SK-N-SH (cell line): ENCODE measurements at regions of chr17 and their contacts with region 1.

Region 1: GRCh38 chr17:82358465-82359350 is at the start of gene TEX19:
- DNase-seq: peak; percentile 72
- H3K4me3 ChIP-seq: no peak within 1 kb of the TSS; a peak in 1 of 4 replicates
- H3K27ac ChIP-seq: peak within 1 kb of the TSS in 1 of 2 experiments; percentile 26; a peak in 1 of 4 replicates
- H3K4me1 ChIP-seq: peaks cover 0 to 8% of the 10 kb centered on the region in 2 experiments; a peak in 1 of 4 replicates
- H3K27me3 ChIP-seq: no peaks in the 10 kb centered on the region; the same call in 1 of the 2 replicates
- CTCF ChIP-seq: peak; percentile 15; the same call in 1 of the 2 replicates
- EP300 ChIP-seq: no peak
- RAD21 ChIP-seq: peak; percentile 40
- polyA plus RNA-seq, gene TEX19: 0.10 and 0.11 TPM in 2 replicates

Region 2: GRCh38 chr17:82370471-82371332 is 12.0 kb after region 1 on chr17:
- CTCF ChIA-PET with region 1: interaction called, 12 read pairs
- POLR2A ChIA-PET with region 1: interaction called, 3 read pairs
- DNase-seq: peak; percentile 51
- H3K4me3 ChIP-seq: peak overlapping the region; percentile 4 to 51; a peak in 2 of 4 replicates
- H3K27ac ChIP-seq: no peak overlapping the region
- H3K4me1 ChIP-seq: peaks cover 3 to 18% of the 10 kb centered on the region in 2 experiments; a peak in 2 of 4 replicates
- H3K27me3 ChIP-seq: peaks cover 56% of the 10 kb centered on the region
- CTCF ChIP-seq: no peak
- EP300 ChIP-seq: no peak
- RAD21 ChIP-seq: no peak

Region 3: GRCh38 chr17:82400830-82401229 is 42.1 kb after region 1 on chr17:
- CTCF ChIA-PET with region 1: interaction called, 17 read pairs
- POLR2A ChIA-PET with region 1: no interaction called
- DNase-seq: no peak
- H3K4me3 ChIP-seq: no peak overlapping the region
- H3K27ac ChIP-seq: no peak overlapping the region
- H3K4me1 ChIP-seq: peaks cover 9 to 35% of the 10 kb centered on the region in 2 experiments; a peak in 3 of 4 replicates
- H3K27me3 ChIP-seq: no peaks in the 10 kb centered on the region
- CTCF ChIP-seq: no peak
- EP300 ChIP-seq: no peak
- RAD21 ChIP-seq: no peak